ENCODE measurements at regions of chr2 and their contacts with region 1.

Region 1: GRCh38 chr2:68467077-68467960 is at the starts of genes APLF and FBXO48:
- DNase-seq: peak; percentile 96
- H3K4me3 Mint-ChIP-seq: peak within 1 kb of the TSS; percentile 93
- H3K27ac Mint-ChIP-seq: peak within 1 kb of the TSS; percentile 94
- H3K4me1 Mint-ChIP-seq: peaks cover 21% of the 10 kb centered on the region
- H3K27me3 Mint-ChIP-seq: no peaks in the 10 kb centered on the region
- CTCF ChIP-seq: no peak
- total RNA-seq, gene APLF: 4.2 and 4.5 TPM in 2 replicates
- total RNA-seq, gene FBXO48: 2.4 and 2.5 TPM in 2 replicates

Region 2: GRCh38 chr2:67277450-67277849 is 1189.9 kb before region 1 on chr2:
- CTCF ChIA-PET with region 1: no interaction called
- intact Hi-C with region 1: loop called (anchors 10 kb)
- DNase-seq: peak; percentile 55
- H3K4me3 Mint-ChIP-seq: no peak overlapping the region
- H3K27ac Mint-ChIP-seq: peak overlapping the region; percentile 86
- H3K4me1 Mint-ChIP-seq: peaks cover 13% of the 10 kb centered on the region
- H3K27me3 Mint-ChIP-seq: no peaks in the 10 kb centered on the region
- CTCF ChIP-seq: no peak

Region 3: GRCh38 chr2:68244456-68244855 is 222.9 kb before region 1 on chr2:
- CTCF ChIA-PET with region 1: no interaction called
- intact Hi-C with region 1: no loop called
- DNase-seq: no peak
- H3K4me3 Mint-ChIP-seq: no peak overlapping the region
- H3K27ac Mint-ChIP-seq: no peak overlapping the region
- H3K4me1 Mint-ChIP-seq: peaks cover 11% of the 10 kb centered on the region
- H3K27me3 Mint-ChIP-seq: no peaks in the 10 kb centered on the region
- CTCF ChIP-seq: no peak

Region 4: DNA sequence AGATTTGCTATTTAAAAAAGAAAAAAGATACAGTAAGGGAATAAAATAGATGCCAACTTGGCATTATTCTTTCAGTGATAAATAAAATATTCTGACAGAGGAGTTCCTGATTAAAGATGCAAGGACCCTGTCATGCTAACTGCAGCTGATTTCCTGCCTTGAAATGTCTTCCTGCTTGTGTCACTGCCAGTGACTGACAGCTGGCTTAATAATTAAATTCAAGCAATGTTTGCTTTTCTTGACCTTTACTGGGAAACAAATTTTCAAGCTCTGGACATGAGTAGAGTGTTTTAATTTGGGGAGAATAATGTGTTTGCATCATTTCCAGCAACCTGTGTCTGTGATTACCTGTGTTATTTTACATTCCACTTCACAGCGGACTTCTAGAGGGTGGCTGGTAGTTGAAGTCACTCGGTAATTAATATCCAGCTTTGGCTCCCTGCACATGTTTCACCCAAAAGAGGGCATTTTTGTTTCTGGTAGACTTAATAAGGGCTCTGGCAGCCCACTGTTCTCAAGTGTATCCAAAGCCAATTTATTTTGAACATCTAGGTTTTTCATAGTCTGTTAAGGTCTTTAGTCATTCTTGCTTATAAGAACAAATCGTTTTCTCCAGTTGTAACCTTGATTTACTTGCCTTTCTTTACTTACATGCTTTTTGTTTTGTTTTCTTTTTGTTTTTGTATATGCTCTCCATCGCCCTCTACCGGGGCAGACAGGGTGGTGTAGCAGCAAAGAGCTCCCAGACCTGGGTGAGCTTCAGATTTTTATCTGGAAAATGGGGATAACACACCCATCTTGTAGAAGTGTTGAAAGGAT is 127.6 kb after region 1 on chr2:
- CTCF ChIA-PET with region 1: interaction called, 11 read pairs
- intact Hi-C with region 1: no loop called
- DNase-seq: peak; percentile 53
- H3K4me3 Mint-ChIP-seq: no peak overlapping the region
- H3K27ac Mint-ChIP-seq: no peak overlapping the region
- H3K4me1 Mint-ChIP-seq: peaks cover 14% of the 10 kb centered on the region
- H3K27me3 Mint-ChIP-seq: no peaks in the 10 kb centered on the region
- CTCF ChIP-seq: peak; percentile 70

Region 5: DNA sequence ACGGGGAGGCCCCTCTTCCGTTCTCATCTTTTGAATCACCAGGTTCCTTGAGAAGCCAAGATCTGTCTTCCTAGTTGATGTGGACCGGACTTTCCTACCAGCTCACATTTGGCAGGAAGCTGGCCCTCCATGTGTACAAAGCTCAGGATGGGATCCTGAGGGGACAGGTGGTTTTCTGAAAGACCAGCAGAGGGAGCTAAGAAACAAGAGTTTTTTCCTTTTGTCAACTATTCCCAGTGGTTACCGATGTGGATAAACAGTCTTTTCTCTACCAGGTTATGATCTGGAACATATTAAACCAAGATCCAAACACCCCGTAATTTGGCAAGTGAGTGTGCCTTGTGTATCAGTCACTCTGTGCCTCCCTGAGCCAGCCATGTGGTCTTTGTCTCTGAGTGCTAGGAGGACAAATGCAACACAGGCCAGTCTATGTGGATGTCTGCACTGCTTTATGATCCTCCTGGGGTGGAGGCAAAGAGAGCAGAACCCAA is 242.1 kb after region 1 on chr2:
- CTCF ChIA-PET with region 1: interaction called, 11 read pairs
- intact Hi-C with region 1: no loop called
- DNase-seq: peak; percentile 17
- H3K4me3 Mint-ChIP-seq: no peak overlapping the region
- H3K27ac Mint-ChIP-seq: no peak overlapping the region
- H3K4me1 Mint-ChIP-seq: peaks cover 5% of the 10 kb centered on the region
- H3K27me3 Mint-ChIP-seq: peaks cover 59% of the 10 kb centered on the region
- CTCF ChIP-seq: peak; percentile 48

Region 6: GRCh38 chr2:68715353-68716041 is 248.2 kb after region 1 on chr2:
- CTCF ChIA-PET with region 1: interaction called, 9 read pairs
- intact Hi-C with region 1: loop called (anchors 1 kb)
- DNase-seq: peak; percentile 76
- H3K4me3 Mint-ChIP-seq: no peak overlapping the region
- H3K27ac Mint-ChIP-seq: no peak overlapping the region
- H3K4me1 Mint-ChIP-seq: no peaks in the 10 kb centered on the region
- H3K27me3 Mint-ChIP-seq: peaks cover 66% of the 10 kb centered on the region
- CTCF ChIP-seq: peak; percentile 54

Region 7: GRCh38 chr2:68909793-68910674 is 442.7 kb after region 1 on chr2:
- CTCF ChIA-PET with region 1: interaction called, 16 read pairs
- intact Hi-C with region 1: loop called (anchors 5 kb)
- DNase-seq: peak; percentile 75
- H3K4me3 Mint-ChIP-seq: no peak overlapping the region
- H3K27ac Mint-ChIP-seq: peak overlapping the region; percentile 9
- H3K4me1 Mint-ChIP-seq: peaks cover 34% of the 10 kb centered on the region
- H3K27me3 Mint-ChIP-seq: no peaks in the 10 kb centered on the region
- CTCF ChIP-seq: peak; percentile 85

Region 8: GRCh38 chr2:68925295-68925896 is 458.1 kb after region 1 on chr2:
- CTCF ChIA-PET with region 1: interaction called, 12 read pairs
- intact Hi-C with region 1: loop called (anchors 2 kb)
- DNase-seq: peak; percentile 55
- H3K4me3 Mint-ChIP-seq: no peak overlapping the region
- H3K27ac Mint-ChIP-seq: no peak overlapping the region
- H3K4me1 Mint-ChIP-seq: peaks cover 15% of the 10 kb centered on the region
- H3K27me3 Mint-ChIP-seq: peaks cover 41% of the 10 kb centered on the region
- CTCF ChIP-seq: peak; percentile 84

Measured in Calu3 (cell line).